ENCODE measurements at regions of chr12 and their contacts with region 1.

Region 1: DNA sequence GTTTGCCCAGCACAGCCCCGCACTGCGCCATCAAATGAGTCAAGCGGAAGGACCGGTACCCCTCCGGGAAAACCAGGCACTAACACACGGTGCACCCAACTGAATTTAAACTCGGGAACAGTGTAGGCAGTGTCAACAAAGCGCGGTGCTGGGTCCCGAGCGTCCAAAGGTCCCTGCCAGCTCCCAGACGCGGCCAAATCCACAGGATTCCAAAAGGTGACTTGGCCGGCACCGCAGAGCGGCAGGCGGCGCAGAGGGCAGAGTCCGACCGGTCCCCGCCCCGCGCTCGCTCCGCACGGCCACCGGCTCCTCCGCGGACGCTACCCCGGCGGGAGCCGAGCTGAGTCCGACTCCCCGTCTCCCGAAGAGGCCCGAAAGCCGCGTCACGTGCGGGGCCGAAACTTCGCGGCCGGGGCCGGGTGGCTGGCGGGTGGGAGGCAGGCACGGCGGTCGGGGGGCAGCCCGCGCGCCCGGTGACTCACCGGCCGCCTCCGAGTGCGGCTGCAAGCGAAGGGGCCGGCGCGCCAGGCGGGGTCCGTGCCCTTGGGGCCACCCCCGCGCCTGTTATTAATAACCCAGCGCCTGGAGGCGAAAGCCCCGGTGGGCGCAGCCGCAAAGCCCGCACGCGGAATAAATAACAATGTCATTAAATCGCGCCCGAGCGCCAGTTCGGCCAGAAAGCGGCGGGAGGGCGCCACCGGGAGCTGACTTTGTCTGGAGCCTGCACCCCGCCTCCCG is 863 bp downstream of the DENND5B start:
- DNase-seq: peak; percentile 69 to 86
- H3K4me3 ChIP-seq: peak overlapping the region; percentile 75 to 98
- H3K27ac ChIP-seq: peak overlapping the region; percentile 94 to 99
- H3K4me1 ChIP-seq: peaks cover 0 to 27% (median 13%) of the 10 kb centered on the region in 4 donors
- H3K27me3 ChIP-seq: no peaks in the 10 kb centered on the region
- CTCF ChIP-seq: no peak

Region 2: DNA sequence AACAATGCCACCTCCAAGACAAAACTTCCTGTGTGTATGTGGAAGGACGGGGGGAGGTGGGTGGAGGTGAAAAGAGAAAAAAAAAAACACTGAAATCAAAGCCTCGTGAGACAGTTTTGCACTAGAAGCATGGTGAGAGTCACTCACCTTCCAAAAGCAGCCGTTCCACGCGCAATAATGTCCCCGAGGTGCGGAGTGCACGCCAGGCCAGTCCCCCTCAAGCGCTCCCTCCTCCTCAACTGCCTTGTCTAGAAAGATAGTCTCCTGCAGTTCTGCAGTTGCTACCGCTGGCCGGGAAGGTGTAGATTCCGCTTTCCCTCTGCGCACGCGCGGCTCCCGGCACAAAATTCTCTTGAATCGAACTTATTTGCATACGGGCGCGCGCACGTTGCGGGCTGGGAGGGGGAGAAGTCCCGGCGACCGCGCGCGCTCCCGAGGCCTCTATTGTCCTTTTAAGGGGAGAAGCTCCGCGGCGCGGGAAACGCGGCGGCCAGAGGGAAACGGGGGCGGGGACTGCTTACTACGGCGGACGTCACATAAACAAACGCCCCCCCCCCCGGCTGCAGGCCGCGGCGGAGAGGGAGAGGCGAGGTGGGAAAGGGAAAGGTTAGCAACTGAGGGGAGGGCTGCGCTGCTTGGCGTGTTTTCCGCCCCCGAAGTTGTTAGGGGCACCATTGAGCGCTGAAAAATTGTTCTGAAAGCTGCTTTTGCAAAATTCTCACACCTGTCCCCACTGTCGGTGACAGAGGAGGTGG is 264.0 kb before region 1 on chr12 and contains the start of gene SINHCAF:
- intact Hi-C with region 1: loop called (anchors 2 kb)
- DNase-seq: peak; percentile 100
- H3K4me3 ChIP-seq: peak within 1 kb of the TSS; percentile 72 to 91
- H3K27ac ChIP-seq: peak within 1 kb of the TSS; percentile 78 to 80
- H3K4me1 ChIP-seq: peaks cover 0 to 4% (median 2%) of the 10 kb centered on the region in 4 donors
- H3K27me3 ChIP-seq: no peaks in the 10 kb centered on the region
- CTCF ChIP-seq: no peak

Measured in tibial artery (tissue), 4 donors.